CD8-positive, alpha-beta T cell (primary cell): ENCODE measurements at regions of chr19 and their contacts with region 1.

Region 1: GRCh38 chr19:18203863-18204393 is at the start of gene RAB3A:
- DNase-seq: peak; percentile 98 to 100 (median 100)
- ATAC-seq: peak; percentile 90
- H3K4me3 ChIP-seq: peak within 1 kb of the TSS; percentile 60 to 91
- H3K4me3 Mint-ChIP-seq: peak within 1 kb of the TSS; percentile 96
- H3K27ac ChIP-seq: peak within 1 kb of the TSS; percentile 76 to 81
- H3K27ac Mint-ChIP-seq: peak within 1 kb of the TSS; percentile 96
- H3K4me1 ChIP-seq: peaks cover 17% of the 10 kb centered on the region
- H3K4me1 Mint-ChIP-seq: peaks cover 21% of the 10 kb centered on the region
- H3K27me3 ChIP-seq: no peaks in the 10 kb centered on the region
- H3K27me3 Mint-ChIP-seq: peaks cover 5% of the 10 kb centered on the region
- CTCF ChIP-seq: no peak
- total RNA-seq, gene RAB3A: 16.8 to 19.4 TPM

Region 2: DNA sequence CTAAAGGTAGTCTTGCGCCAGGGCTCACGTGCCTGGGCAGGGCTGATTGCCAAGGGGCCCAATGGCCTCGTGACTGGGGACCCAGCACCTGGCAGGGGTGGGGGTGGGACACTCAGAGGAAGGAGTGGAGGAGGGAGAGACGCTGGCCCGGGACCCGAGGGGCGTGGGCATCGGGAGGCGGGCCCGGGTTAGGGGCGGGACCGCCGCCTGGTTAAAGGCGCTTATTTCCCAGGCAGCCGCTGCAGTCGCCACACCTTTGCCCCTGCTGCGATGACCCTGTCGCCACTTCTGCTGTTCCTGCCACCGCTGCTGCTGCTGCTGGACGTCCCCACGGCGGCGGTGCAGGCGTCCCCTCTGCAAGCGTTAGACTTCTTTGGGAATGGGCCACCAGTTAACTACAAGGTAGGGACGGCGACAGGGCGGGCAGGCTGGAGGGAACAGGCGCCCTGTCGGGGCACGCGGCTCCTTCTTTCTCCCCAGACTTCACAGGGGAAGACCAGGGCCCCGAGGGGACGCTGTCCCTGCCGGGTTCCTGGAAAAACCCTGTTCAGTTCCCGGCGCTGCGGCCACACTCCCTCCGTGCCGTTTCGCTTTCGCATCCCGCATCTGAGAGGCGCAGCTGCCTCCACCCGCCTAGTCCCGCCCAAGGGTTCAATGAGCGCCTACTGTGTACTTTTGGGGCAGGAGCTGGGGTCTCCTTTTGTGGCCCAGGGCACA is 30.2 kb before region 1 on chr19 and contains the start of gene IFI30:
- CTCF ChIA-PET with region 1: no interaction called
- POLR2A ChIA-PET with region 1: no interaction called
- intact Hi-C with region 1: loop called in 1 of 2 experiments (anchors 1 kb)
- DNase-seq: peak in 7 of 9 experiments; percentile 41 to 73 (median 60)
- ATAC-seq: peak; percentile 86
- H3K4me3 ChIP-seq: peak within 1 kb of the TSS; percentile 58 to 88
- H3K4me3 Mint-ChIP-seq: peak within 1 kb of the TSS; percentile 87
- H3K27ac ChIP-seq: peak within 1 kb of the TSS in 1 of 2 experiments; percentile 56
- H3K27ac Mint-ChIP-seq: peak within 1 kb of the TSS; percentile 52
- H3K4me1 ChIP-seq: peaks cover 16% of the 10 kb centered on the region
- H3K4me1 Mint-ChIP-seq: peaks cover 7% of the 10 kb centered on the region
- H3K27me3 ChIP-seq: no peaks in the 10 kb centered on the region
- H3K27me3 Mint-ChIP-seq: no peaks in the 10 kb centered on the region
- CTCF ChIP-seq: no peak
- total RNA-seq, gene IFI30: 1.6 to 1.8 TPM

Region 3: GRCh38 chr19:18185538-18185937 is 18.4 kb before region 1 on chr19:
- CTCF ChIA-PET with region 1: no interaction called
- POLR2A ChIA-PET with region 1: no interaction called
- intact Hi-C with region 1: no loop called
- DNase-seq: no peak
- ATAC-seq: no peak
- H3K4me3 ChIP-seq: no peak overlapping the region
- H3K4me3 Mint-ChIP-seq: no peak overlapping the region
- H3K27ac ChIP-seq: no peak overlapping the region
- H3K27ac Mint-ChIP-seq: no peak overlapping the region
- H3K4me1 ChIP-seq: no peaks in the 10 kb centered on the region
- H3K4me1 Mint-ChIP-seq: no peaks in the 10 kb centered on the region
- H3K27me3 ChIP-seq: peaks cover 0 to 4% of the 10 kb centered on the region in 2 experiments
- H3K27me3 Mint-ChIP-seq: peaks cover 3% of the 10 kb centered on the region
- CTCF ChIP-seq: no peak

Region 4: GRCh38 chr19:18233224-18233825 is 29.4 kb after region 1 on chr19:
- CTCF ChIA-PET with region 1: interaction called, 5 read pairs
- POLR2A ChIA-PET with region 1: no interaction called
- intact Hi-C with region 1: loop called in 1 of 2 experiments (anchors 2 kb)
- DNase-seq: peak in 7 of 9 experiments; percentile 17 to 70 (median 56)
- ATAC-seq: peak; percentile 90
- H3K4me3 ChIP-seq: no peak overlapping the region
- H3K4me3 Mint-ChIP-seq: no peak overlapping the region
- H3K27ac ChIP-seq: no peak overlapping the region
- H3K27ac Mint-ChIP-seq: no peak overlapping the region
- H3K4me1 ChIP-seq: no peaks in the 10 kb centered on the region
- H3K4me1 Mint-ChIP-seq: no peaks in the 10 kb centered on the region
- H3K27me3 ChIP-seq: peaks cover 34 to 35% of the 10 kb centered on the region in 2 experiments
- H3K27me3 Mint-ChIP-seq: peaks cover 61% of the 10 kb centered on the region
- CTCF ChIP-seq: no peak

Region 5: GRCh38 chr19:18408053-18408476 is 204.1 kb after region 1 on chr19:
- CTCF ChIA-PET with region 1: interaction called, 8 read pairs
- POLR2A ChIA-PET with region 1: no interaction called
- intact Hi-C with region 1: loop called in 1 of 2 experiments (anchors 1 kb)
- DNase-seq: peak in 2 of 9 experiments; percentile 33 to 40
- ATAC-seq: no peak
- H3K4me3 ChIP-seq: no peak overlapping the region
- H3K4me3 Mint-ChIP-seq: no peak overlapping the region
- H3K27ac ChIP-seq: no peak overlapping the region
- H3K27ac Mint-ChIP-seq: no peak overlapping the region
- H3K4me1 ChIP-seq: no peaks in the 10 kb centered on the region
- H3K4me1 Mint-ChIP-seq: peaks cover 2% of the 10 kb centered on the region
- H3K27me3 ChIP-seq: no peaks in the 10 kb centered on the region
- H3K27me3 Mint-ChIP-seq: peaks cover 2% of the 10 kb centered on the region
- CTCF ChIP-seq: peak; percentile 20

Region 6: GRCh38 chr19:18542936-18543815 is 339.2 kb after region 1 on chr19 and contains the start of gene FKBP8:
- CTCF ChIA-PET with region 1: no interaction called
- POLR2A ChIA-PET with region 1: no interaction called
- intact Hi-C with region 1: loop called in 1 of 2 experiments (anchors 10 kb)
- DNase-seq: peak; percentile 86 to 96 (median 94)
- ATAC-seq: peak; percentile 97
- H3K4me3 ChIP-seq: peak within 1 kb of the TSS; percentile 58 to 62
- H3K4me3 Mint-ChIP-seq: peak within 1 kb of the TSS; percentile 89
- H3K27ac ChIP-seq: peak within 1 kb of the TSS; percentile 64 to 86
- H3K27ac Mint-ChIP-seq: peak within 1 kb of the TSS; percentile 96
- H3K4me1 ChIP-seq: peaks cover 20% of the 10 kb centered on the region
- H3K4me1 Mint-ChIP-seq: peaks cover 26% of the 10 kb centered on the region
- H3K27me3 ChIP-seq: no peaks in the 10 kb centered on the region
- H3K27me3 Mint-ChIP-seq: no peaks in the 10 kb centered on the region
- CTCF ChIP-seq: no peak
- total RNA-seq, gene FKBP8: 155 to 158 TPM